Calu3 (cell line): ENCODE measurements at regions of chr3 and their contacts with region 1.

Region 1: GRCh38 chr3:156151824-156152428 is 31.5 kb downstream of the KCNAB1 start:
- DNase-seq: peak; percentile 84
- H3K4me3 Mint-ChIP-seq: no peak overlapping the region
- H3K27ac Mint-ChIP-seq: no peak overlapping the region
- H3K4me1 Mint-ChIP-seq: peaks cover 8% of the 10 kb centered on the region
- H3K27me3 Mint-ChIP-seq: peaks cover 55% of the 10 kb centered on the region
- CTCF ChIP-seq: peak; percentile 95

Region 2: DNA sequence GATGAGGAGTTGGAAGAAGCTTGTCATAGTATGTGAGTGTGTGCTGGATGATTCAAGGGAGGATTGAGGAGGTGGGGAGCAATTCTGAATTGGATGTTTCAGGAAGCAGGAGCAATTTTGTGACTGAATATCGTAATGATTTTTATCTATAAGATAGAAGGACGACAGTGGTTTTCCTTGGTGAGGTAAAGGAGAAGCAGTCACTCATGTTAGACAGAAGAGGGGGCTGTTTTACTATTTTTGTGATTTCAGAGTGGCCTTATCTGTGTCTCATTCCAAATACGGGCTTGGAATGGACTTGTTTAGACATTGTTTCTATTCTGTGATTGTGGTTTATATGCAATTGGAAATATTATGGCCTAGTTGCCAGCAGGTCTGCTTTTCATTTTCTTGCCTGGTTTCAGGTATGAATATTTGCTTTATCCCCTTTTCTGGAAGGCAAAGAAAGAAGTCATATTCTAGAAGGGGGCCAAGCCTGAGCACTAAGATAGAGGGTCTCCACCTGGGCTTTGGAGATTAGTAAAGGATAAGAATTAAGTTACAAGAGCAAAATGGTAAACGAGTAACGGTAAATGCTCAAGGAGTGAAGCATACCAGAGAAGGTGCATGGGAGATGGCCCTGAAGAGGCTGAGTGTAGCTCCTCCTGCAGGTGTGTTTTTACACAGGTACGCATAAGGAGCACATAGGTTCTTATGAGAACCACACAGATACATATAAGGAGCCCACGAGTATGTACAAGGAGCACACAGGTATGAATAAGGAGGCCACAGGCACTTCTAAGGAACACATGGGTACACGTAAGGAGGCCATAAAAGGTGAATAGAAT is 156.2 kb before region 1 on chr3:
- CTCF ChIA-PET with region 1: no interaction called
- intact Hi-C with region 1: loop called (anchors 1 kb)
- DNase-seq: no peak
- H3K4me3 Mint-ChIP-seq: no peak overlapping the region
- H3K27ac Mint-ChIP-seq: no peak overlapping the region
- H3K4me1 Mint-ChIP-seq: peaks cover 7% of the 10 kb centered on the region
- H3K27me3 Mint-ChIP-seq: peaks cover 12% of the 10 kb centered on the region
- CTCF ChIP-seq: peak; percentile 36

Region 3: GRCh38 chr3:156382458-156383346 is 230.8 kb after region 1 on chr3:
- CTCF ChIA-PET with region 1: interaction called, 63 read pairs
- intact Hi-C with region 1: loop called (anchors 1 kb)
- DNase-seq: peak; percentile 82
- H3K4me3 Mint-ChIP-seq: no peak overlapping the region
- H3K27ac Mint-ChIP-seq: no peak overlapping the region
- H3K4me1 Mint-ChIP-seq: no peaks in the 10 kb centered on the region
- H3K27me3 Mint-ChIP-seq: peaks cover 80% of the 10 kb centered on the region
- CTCF ChIP-seq: peak; percentile 94

Region 4: DNA sequence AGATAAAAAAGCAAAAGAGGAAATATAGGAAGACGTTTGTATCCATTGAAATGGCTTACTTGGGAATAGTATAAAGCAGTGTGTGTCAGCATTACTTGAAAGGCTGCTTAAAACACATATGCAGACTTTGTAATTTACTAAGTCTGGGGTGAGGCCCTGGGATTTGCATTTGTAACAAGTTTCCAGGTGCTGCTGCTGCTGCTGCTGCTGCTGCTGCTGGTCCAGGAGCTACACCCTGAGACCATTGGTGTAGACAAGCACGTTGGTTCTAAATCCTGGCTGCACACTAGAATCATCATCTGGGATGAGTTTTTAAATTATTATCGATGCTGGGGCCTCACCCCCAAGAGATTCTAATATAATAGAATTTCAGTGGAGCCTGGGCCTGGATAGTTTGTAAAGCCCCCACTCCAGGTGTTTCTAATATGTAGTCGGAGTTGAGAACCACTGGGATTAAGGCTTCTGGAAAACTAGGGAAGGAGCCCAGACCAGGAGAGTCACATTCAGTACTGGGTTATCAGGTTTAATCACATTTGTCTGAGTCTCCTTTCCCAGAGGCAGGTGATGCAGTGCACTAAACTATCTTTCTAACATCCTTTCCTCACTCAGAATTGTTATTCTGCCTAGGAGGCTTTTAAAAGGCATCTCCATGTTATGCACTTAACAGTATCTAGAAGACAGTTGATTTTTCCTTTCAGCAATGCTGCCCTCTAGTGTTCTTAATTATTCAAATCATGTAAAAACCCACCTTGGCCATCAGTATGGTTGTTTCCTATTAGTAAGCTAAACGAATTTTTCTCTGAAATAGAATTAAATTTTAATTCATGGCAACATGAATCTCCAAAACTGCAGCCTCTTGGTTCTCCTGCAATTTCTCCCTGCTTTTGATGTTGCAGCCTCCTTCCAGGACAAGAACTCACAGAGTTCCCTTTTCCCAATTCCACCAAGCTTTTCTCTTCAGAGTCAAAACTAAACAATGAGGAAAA is 357.6 kb after region 1 on chr3:
- CTCF ChIA-PET with region 1: interaction called, 14 read pairs
- intact Hi-C with region 1: loop called (anchors 1 kb)
- DNase-seq: peak; percentile 22
- H3K4me3 Mint-ChIP-seq: no peak overlapping the region
- H3K27ac Mint-ChIP-seq: no peak overlapping the region
- H3K4me1 Mint-ChIP-seq: no peaks in the 10 kb centered on the region
- H3K27me3 Mint-ChIP-seq: peaks cover 16% of the 10 kb centered on the region
- CTCF ChIP-seq: peak; percentile 22

Region 5: DNA sequence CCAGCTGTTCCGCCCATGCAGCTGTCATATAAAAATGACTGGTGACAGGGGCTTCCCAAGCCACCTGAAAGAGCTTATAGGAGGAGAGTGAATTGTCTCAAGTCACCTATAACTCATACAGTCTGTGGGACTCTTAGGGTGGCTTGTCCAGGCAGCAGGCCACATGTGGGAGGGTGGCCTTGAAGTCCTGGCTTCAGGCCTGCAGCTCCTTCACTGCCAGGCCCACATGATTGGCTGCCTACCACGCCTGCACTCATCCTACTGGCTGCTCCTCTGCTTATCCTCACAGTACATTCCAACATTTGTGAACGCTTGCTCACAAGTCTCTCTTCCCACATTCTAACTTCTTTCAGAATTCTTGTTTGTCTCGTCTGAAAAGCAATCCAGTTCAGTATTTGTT is 481.4 kb after region 1 on chr3:
- CTCF ChIA-PET with region 1: no interaction called
- intact Hi-C with region 1: no loop called
- DNase-seq: no peak
- H3K4me3 Mint-ChIP-seq: no peak overlapping the region
- H3K27ac Mint-ChIP-seq: no peak overlapping the region
- H3K4me1 Mint-ChIP-seq: peaks cover 28% of the 10 kb centered on the region
- H3K27me3 Mint-ChIP-seq: no peaks in the 10 kb centered on the region
- CTCF ChIP-seq: no peak

Region 6: DNA sequence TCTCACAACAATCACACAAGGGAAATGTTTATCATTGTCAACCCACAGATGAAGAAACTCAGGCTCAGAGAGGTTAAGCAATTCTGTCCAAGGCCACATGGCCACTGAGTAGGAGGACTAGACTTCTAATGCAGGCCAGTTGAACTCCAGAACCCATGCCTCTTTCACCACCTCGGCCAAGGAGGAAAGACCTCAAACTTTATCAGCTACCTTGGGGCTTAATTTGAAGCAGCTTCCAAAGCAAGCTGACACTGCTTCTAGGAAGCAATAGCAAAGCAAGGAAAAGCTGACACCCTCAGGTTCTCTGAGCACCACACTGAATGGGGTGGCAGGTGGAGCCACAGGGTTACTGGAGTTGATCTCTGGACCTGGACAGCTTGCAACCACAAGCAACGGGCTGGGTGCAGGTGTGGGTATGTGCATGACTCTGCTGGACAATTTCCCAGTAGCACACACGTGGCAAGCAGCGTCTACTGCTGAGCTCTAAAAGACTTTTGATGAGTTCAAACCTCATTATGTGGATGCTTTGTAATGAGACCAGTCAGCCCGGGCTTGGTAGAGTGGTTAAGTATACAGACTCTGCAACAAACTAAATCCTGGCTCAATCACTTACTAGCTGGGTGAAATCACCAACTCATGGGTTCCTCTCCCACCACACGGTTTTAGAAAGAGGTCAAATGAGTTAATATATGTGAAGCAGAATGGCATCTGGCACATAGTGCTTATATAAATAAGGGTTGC is 984.9 kb after region 1 on chr3:
- CTCF ChIA-PET with region 1: interaction called, 8 read pairs
- intact Hi-C with region 1: loop called (anchors 1 kb)
- DNase-seq: peak; percentile 48
- H3K4me3 Mint-ChIP-seq: peak overlapping the region; percentile 49
- H3K27ac Mint-ChIP-seq: peak overlapping the region; percentile 56
- H3K4me1 Mint-ChIP-seq: peaks cover 52% of the 10 kb centered on the region
- H3K27me3 Mint-ChIP-seq: no peaks in the 10 kb centered on the region
- CTCF ChIP-seq: no peak